GM23248 (cell line): ENCODE measurements at regions of chr14 and their contacts with region 1.

Region 1: GRCh38 chr14:22386924-22387775 is 201.9 kb downstream of the DAD1 start:
- DNase-seq: peak; percentile 80
- H3K4me3 ChIP-seq: no peak overlapping the region
- H3K27ac ChIP-seq: no peak overlapping the region
- H3K4me1 ChIP-seq: no peaks in the 10 kb centered on the region
- H3K27me3 ChIP-seq: peaks cover 39% of the 10 kb centered on the region

Region 2: DNA sequence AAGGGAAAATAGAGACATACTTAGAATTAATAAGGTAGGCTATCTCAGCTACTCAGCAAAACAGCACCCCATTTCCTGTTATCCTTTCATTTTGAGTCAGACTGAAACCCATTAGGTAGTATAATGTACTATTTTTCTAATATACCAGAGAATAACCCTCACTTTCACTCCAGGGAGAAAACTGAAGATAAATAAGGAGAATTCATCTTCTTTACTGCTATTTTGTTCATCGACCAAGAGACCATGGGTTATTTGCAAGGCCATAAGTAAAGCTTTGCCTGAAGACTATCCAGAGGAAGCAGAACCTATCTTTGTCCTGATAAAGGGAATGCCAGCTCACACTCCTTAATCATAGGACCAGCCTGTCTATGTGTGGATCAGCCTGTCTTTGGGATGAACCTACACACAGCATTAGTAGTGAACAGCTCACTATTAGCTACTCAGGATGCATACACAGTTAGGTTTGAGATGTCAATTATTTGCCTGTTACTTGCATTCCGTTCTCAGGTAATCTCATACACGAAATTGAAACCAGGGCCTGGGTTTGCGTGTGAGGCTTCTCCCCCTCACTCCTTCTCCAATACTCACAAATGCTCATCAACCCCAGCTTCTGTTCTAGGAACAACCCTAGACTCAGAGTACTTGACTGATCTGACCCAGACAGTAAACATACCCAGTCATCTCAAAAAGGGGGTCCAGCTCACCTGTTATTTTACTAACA is 77.4 kb after region 1 on chr14:
- in situ Hi-C with region 1: loop called (anchors 5 kb)
- DNase-seq: no peak
- H3K4me3 ChIP-seq: no peak overlapping the region
- H3K27ac ChIP-seq: no peak overlapping the region
- H3K4me1 ChIP-seq: peaks cover 18% of the 10 kb centered on the region
- H3K27me3 ChIP-seq: peaks cover 15% of the 10 kb centered on the region; the same call in 1 of the 2 replicates

Region 3: GRCh38 chr14:22502007-22502406 is 114.9 kb after region 1 on chr14:
- in situ Hi-C with region 1: no loop called
- DNase-seq: no peak
- H3K4me3 ChIP-seq: no peak overlapping the region
- H3K27ac ChIP-seq: no peak overlapping the region
- H3K4me1 ChIP-seq: no peaks in the 10 kb centered on the region
- H3K27me3 ChIP-seq: no peaks in the 10 kb centered on the region; the same call in 1 of the 2 replicates

Region 4: DNA sequence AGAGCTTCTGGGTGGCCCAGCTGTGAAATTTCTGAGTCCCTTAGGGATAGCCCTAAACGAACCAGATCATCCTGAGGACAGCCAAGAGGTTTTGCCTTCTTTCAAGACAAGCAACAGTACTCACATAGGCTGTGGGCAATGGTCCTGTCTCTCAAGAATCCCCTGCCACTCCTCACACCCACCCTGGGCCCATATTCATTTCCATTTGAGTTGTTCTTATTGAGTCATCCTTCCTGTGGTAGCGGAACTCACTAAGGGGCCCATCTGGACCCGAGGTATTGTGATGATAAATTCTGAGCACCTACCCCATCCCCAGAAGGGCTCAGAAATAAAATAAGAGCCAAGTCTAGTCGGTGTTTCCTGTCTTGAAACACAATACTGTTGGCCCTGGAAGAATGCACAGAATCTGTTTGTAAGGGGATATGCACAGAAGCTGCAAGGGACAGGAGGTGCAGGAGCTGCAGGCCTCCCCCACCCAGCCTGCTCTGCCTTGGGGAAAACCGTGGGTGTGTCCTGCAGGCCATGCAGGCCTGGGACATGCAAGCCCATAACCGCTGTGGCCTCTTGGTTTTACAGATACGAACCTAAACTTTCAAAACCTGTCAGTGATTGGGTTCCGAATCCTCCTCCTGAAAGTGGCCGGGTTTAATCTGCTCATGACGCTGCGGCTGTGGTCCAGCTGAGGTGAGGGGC is 163.0 kb after region 1 on chr14:
- in situ Hi-C with region 1: loop called (anchors 10 kb)
- DNase-seq: no peak
- H3K4me3 ChIP-seq: no peak overlapping the region
- H3K27ac ChIP-seq: no peak overlapping the region
- H3K4me1 ChIP-seq: peaks cover 26% of the 10 kb centered on the region
- H3K27me3 ChIP-seq: no peaks in the 10 kb centered on the region

Region 5: DNA sequence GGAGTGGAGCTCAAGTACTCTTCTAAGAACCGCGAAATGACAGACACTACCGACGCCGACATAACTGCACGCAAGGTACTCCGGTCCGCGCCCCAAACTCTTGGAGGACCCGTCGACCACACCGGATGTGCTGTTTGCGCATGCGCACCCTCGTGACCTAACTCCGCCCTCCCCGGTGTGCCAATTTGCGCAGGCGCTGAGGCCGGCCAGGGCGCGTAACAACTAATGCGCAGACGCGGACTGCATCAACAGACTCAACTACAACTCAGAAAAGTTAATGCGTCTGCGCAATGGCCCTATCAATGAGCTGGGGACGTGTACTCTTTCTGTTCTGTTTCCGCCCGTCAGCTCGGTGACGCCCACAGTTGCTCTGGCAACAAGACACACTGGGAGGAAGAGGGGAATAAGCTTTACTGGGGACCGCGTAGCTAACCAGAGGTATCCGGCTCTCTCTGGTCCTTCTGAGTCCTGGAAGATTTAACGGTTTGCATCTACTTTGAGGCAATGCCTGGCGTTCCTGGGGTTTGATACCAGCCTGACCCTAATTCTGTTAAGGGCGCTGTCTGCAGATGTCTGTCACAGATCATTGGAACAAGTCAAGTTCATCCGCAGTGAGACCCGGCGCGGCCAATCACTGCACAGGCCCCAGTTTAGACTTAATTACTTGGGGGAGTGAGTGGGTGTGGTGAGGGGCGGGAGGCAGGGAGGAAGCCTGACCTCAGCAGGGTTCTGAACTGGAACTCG is 202.1 kb after region 1 on chr14 and contains the start of gene DAD1:
- in situ Hi-C with region 1: no loop called
- DNase-seq: peak; percentile 100
- H3K4me3 ChIP-seq: peak within 1 kb of the TSS; percentile 100
- H3K27ac ChIP-seq: peak within 1 kb of the TSS; percentile 100
- H3K4me1 ChIP-seq: peaks cover 36% of the 10 kb centered on the region
- H3K27me3 ChIP-seq: no peaks in the 10 kb centered on the region
- total RNA-seq, gene DAD1: 369 and 375 TPM in 2 replicates

Region 6: GRCh38 chr14:22653012-22653621 is 266.0 kb after region 1 on chr14:
- in situ Hi-C with region 1: loop called (anchors 25 kb)
- DNase-seq: peak; percentile 87
- H3K4me3 ChIP-seq: no peak overlapping the region
- H3K27ac ChIP-seq: no peak overlapping the region
- H3K4me1 ChIP-seq: peaks cover 14% of the 10 kb centered on the region
- H3K27me3 ChIP-seq: no peaks in the 10 kb centered on the region